ENCODE measurements at regions of chr21 and their contacts with region 1.

Region 1: GRCh38 chr21:20971296-20971921 is 26.8 kb upstream of the NCAM2 start:
- DNase-seq: peak; percentile 42
- H3K4me3 ChIP-seq: no peak overlapping the region
- H3K4me3 Mint-ChIP-seq: no peak overlapping the region
- H3K27ac Mint-ChIP-seq: no peak overlapping the region
- H3K4me1 ChIP-seq: no peaks in the 10 kb centered on the region
- H3K4me1 Mint-ChIP-seq: no peaks in the 10 kb centered on the region
- H3K27me3 ChIP-seq: no peaks in the 10 kb centered on the region
- H3K27me3 Mint-ChIP-seq: no peaks in the 10 kb centered on the region
- CTCF ChIP-seq: peak in 1 of 2 experiments; percentile 59

Region 2: DNA sequence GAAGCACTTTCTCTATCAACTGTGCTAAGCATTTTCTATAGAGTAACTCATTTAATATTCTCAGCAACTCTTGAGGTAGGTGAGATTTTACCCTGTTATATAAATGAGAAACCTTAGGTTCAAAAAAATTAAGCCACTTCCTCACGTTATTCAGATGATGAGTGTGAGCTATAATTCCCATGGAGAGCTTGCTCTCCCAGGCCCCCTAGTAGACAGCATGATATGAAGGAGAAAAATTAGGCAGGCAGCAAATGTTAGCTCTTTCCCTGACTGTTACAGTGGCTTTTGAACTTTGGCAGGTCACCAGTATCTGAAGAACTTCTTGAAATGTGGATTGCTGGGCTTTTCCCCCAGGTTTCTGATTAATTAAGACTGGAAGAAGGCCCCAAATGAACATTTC is 779.9 kb after region 1 on chr21:
- CTCF ChIA-PET with region 1: no interaction called
- POLR2A ChIA-PET with region 1: no interaction called
- intact Hi-C with region 1: loop called (anchors 5 kb)
- DNase-seq: no peak
- H3K4me3 ChIP-seq: no peak overlapping the region
- H3K4me3 Mint-ChIP-seq: no peak overlapping the region
- H3K27ac Mint-ChIP-seq: no peak overlapping the region
- H3K4me1 ChIP-seq: no peaks in the 10 kb centered on the region
- H3K4me1 Mint-ChIP-seq: no peaks in the 10 kb centered on the region
- H3K27me3 ChIP-seq: no peaks in the 10 kb centered on the region
- H3K27me3 Mint-ChIP-seq: no peaks in the 10 kb centered on the region
- CTCF ChIP-seq: no peak